Activated CD8-positive, alpha-beta T cell treated with anti-CD3 and anti-CD28 coated beads, Interleukin-2, amount 10 ng/mL, durations not matched to agents 7 days and 5 days (primary cell): ENCODE measurements at regions of chr22 and their contacts with region 1.

Region 1: DNA sequence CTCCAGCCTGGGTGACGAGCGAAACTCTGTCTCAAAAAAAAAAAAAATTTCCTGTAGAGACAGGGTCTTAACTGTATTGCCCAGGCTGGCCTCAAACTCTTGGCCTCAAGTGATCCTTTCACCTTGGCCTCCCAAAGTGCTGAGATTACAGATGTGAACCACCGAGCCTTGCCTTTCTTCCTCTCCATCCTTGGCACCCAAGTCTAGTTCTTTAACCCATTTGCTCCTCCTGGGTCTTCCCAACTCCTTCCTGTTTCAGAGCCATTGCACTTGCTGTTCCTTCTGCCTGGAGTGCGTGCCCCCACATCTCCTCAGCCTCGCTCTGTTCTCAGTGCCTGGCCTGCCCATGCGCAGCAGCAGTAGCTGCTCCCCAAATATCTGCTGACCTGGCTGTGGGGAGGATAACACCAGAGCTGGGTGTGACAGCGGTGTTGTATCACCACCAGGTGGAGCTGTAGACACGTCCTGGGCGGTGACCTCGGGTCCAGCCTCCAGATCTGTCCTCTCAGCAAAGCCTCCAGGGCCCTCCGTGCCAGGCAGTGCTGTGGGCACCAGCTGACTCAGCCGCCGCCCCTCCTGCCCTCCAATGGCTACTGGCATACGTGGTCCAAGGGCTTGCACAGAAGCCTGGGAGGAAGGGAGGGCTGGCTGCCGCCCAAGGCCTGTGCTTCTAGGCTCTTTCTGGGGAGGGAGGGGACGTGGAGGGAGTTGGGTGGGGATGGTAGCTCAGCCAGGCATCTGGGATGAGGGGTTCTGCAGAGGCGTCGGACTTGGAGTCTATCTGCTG is 22.0 kb downstream of the TEF start:
- DNase-seq: peak; percentile 91
- ATAC-seq: peak; percentile 99
- H3K4me3 Mint-ChIP-seq: no peak overlapping the region
- H3K27ac Mint-ChIP-seq: peak overlapping the region; percentile 35
- H3K4me1 Mint-ChIP-seq: peaks cover 15% of the 10 kb centered on the region
- H3K27me3 Mint-ChIP-seq: no peaks in the 10 kb centered on the region

Region 2: DNA sequence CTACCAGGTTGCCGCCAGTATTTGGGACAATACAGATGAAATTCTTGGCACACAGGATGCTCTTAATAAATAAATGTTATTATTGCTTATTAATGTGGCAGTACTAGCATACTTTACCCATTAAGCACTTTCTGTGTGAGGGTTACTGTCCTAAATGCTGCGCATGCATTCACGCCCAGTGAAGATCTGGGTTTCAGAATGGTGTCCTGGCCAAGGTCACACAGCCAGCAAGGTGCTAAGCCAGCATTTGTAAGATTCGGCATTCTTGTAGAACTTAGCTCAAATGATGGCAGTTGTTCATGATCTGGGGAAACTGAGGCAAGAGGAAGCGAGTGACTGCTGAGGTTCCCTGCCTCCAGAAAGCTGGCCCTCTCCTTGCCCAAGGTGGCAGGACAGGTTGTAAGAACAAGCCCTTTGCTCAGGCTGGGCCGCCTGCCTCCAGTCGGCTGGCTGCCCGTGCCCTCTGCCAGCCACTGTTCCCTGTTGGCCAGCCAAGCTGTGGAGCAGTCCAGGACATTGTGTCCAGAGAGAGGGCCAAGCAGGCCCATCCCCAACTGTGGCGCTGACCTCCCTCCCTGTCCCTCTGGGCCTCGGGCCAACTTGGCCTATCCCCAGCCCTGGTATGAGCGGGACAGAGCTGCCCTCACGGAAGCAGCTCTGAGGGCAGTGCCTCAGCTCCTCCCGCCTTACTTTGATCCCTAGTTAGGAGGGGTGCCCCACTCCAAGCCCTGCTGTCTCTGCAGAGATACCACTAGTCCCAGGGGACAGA is 14.1 kb after region 1 on chr22:
- CTCF ChIA-PET with region 1: interaction called, 13 read pairs
- POLR2A ChIA-PET with region 1: no interaction called
- DNase-seq: no peak
- ATAC-seq: no peak
- H3K4me3 Mint-ChIP-seq: no peak overlapping the region
- H3K27ac Mint-ChIP-seq: no peak overlapping the region
- H3K4me1 Mint-ChIP-seq: peaks cover 15% of the 10 kb centered on the region
- H3K27me3 Mint-ChIP-seq: no peaks in the 10 kb centered on the region

Region 3: DNA sequence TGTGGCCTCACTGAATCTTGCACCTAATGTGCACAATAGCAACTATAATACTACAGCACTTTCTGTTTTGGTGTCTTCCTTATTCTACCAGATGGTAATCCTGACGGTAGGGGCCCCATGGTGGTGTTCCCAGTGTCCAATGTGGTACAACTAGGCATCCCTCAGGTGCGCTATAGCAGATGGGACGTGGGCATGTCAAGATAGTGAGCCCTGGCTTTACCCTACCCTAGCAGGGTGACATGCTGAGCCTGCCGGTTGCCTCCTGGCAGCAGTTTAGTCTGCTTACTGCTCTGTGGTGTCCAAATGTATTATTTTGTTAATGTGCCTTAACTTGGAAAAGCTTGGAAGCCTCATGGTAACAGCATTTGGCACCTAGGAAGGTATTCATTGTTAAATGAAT is 84.4 kb after region 1 on chr22:
- CTCF ChIA-PET with region 1: interaction called, 12 read pairs
- POLR2A ChIA-PET with region 1: no interaction called
- DNase-seq: no peak
- ATAC-seq: no peak
- H3K4me3 Mint-ChIP-seq: no peak overlapping the region
- H3K27ac Mint-ChIP-seq: no peak overlapping the region
- H3K4me1 Mint-ChIP-seq: peaks cover 5% of the 10 kb centered on the region
- H3K27me3 Mint-ChIP-seq: no peaks in the 10 kb centered on the region

Region 4: DNA sequence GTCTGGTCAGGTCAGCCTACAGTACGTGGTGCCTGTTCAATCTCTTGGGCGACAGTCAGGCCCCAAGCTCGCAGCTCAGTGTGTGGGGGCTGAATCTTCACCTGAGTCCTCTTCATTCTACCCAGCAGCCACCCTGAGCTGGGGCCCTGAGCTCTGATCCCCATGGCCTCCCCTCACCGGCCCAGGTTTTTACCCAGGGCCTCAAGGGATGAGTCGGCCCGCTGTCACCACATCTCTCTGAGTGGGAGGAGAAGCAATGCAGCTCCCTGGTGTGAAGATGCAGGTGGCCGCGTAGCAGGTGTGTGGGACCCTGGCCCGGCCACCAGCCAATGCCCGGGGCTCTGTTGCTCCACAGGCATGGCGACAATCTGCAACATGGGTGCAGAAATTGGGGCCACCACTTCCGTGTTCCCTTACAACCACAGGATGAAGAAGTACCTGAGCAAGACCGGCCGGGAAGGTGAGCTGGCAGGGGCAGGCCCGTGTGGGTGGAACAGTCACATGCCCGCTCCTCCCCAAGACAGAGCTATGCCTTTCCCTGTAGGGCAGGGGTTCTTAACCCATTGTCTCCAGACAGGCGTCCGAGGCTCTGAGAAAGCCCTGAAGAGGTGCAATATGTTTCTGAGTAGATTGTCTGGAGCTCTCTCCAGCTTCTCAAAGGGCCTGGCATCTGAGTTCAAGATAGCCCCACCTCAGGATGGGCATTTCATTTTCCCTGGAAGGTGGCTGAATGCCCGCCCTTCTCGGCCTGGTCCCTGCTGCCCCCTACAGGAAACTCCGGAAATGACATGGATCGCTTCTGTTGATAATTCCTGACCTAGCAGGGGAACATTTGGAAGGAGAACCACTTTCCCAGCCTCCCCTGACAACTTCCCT is 113.7 kb after region 1 on chr22:
- CTCF ChIA-PET with region 1: interaction called, 129 read pairs
- POLR2A ChIA-PET with region 1: interaction called, 3 read pairs
- DNase-seq: no peak
- ATAC-seq: no peak
- H3K4me3 Mint-ChIP-seq: no peak overlapping the region
- H3K27ac Mint-ChIP-seq: no peak overlapping the region
- H3K4me1 Mint-ChIP-seq: no peaks in the 10 kb centered on the region
- H3K27me3 Mint-ChIP-seq: no peaks in the 10 kb centered on the region

Region 5: DNA sequence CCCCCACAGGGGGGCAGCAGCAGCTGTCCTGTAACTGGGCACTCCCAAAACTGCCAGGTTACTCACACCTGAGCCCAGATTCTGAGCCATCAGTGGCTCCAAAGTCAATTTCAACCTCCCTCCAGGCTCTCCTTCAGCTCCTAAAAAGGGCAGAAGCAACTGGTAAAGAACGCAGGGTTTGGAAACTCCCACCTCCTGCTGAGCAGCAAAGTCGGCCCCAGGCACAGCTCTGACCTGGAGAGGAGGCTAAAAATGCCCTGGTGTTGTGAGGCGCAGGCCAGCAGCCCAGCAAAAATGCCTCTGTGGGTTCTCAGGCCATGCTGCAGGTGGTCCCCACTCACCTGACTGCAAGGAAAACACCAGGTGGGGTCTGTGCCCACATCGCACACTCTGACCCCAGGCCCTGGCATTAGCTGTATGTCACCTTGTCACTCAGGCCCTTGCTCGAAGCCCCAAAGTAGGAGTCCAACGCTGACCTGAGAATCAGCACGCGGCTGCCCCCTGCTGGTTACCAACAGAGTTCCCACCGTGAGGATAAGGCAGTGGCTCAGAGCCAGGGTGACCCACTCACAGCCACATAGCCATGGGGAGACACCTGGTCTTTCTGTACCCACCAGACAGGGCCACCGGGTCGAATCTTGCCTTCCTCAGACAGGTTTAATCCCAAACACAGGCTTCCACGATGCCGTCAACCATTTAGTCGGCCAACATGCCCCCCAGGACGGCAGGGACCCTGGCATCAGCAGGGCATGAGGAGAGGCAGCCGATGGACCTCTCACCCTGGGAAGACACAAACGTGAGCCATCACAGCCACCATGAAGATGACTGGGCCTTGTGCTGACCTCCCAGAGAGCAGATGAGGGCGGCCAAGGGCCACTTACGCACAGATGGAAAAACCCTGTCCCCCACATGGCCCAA is 129.4 kb after region 1 on chr22:
- CTCF ChIA-PET with region 1: interaction called, 129 read pairs
- POLR2A ChIA-PET with region 1: no interaction called
- DNase-seq: peak; percentile 80
- ATAC-seq: peak; percentile 75
- H3K4me3 Mint-ChIP-seq: no peak overlapping the region
- H3K27ac Mint-ChIP-seq: no peak overlapping the region
- H3K4me1 Mint-ChIP-seq: no peaks in the 10 kb centered on the region
- H3K27me3 Mint-ChIP-seq: no peaks in the 10 kb centered on the region